Activated T-helper 1 cell treated with anti-CD3 and anti-CD28 coated beads, Interleukin-12 subunit alpha, Interleukin-12 subunit beta, Interleukin-2, Interleukin-4 antibody, amounts not matched to agents 30 ng/mL and 10 ng/mL and 1 ng/mL, durations not matched to agents 14 hours and 24 hours and 36 hours (primary cell): ENCODE measurements at regions of chr6 and their contacts with region 1.

Region 1: DNA sequence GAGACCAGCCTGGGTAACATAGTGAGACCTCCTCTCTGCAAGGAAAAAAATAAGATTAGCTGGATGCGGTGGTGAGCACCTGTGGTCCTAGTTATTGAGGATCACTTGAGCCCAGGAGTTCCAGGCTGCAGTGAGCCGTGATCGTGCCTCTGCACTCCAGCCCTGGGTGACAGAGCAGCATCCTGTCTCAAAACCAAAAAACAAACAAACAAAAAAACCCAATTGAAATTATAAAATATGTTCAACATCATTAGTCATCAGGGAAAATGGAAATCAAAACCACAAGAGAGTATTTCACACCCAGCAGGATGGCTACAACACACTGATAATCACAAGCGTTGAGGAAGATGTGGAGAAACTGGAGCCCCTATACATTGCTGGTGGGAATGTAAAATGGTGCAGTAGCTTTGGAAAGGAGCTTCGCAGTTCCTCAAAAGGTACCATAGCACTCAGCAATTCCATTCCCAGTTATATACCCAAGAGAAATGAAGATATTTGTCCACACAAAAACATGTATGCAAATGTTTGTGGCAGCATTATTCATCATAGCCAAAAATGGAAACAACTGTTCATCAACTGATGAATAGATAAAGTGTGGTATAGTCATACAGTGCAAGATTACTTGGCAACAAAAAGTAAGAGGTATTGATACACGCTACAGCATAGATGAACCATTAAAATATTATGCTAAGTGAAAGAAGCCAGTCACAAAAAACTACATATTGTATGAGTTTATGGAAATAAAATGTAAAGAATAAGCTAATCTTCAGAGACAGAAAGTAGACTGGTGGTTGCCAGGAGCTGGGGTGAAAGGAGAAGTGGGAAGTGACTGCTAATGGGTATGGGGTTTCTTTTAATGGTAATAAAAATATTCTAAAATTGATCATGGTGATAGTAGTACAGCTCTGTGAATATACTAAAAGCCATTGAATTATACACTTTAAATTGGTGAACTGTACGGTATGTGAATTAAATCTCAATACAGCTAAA is 38.7 kb upstream of the RIPOR2 start:
- DNase-seq: no peak
- H3K4me3 Mint-ChIP-seq: peak overlapping the region; percentile 34
- H3K27ac Mint-ChIP-seq: peak overlapping the region; percentile 86
- H3K4me1 Mint-ChIP-seq: peaks cover 52% of the 10 kb centered on the region
- H3K27me3 Mint-ChIP-seq: no peaks in the 10 kb centered on the region

Region 2: DNA sequence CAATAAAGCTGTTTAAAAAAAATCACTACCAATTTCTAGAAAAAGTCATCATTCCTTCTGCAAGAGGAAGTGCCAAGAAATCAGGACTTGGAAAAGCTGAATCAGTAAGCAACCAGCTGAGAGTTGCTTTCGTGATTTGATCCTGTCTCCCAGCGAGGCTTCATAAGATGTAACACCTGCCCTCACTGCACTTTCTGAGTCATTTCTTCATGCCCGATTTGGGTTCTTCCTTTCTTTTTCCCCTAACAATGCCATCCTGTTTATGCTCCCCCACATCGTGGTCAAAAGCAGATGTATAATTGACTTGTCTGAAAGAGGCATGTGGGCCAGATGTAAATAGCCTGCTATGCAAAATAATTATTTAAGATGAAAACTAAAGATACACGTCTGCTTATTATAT is 90.9 kb before region 1 on chr6:
- intact Hi-C with region 1: loop called (anchors 1 kb)
- DNase-seq: no peak
- H3K4me3 Mint-ChIP-seq: peak overlapping the region; percentile 66
- H3K27ac Mint-ChIP-seq: peak overlapping the region; percentile 91
- H3K4me1 Mint-ChIP-seq: peaks cover 79% of the 10 kb centered on the region
- H3K27me3 Mint-ChIP-seq: no peaks in the 10 kb centered on the region

Region 3: DNA sequence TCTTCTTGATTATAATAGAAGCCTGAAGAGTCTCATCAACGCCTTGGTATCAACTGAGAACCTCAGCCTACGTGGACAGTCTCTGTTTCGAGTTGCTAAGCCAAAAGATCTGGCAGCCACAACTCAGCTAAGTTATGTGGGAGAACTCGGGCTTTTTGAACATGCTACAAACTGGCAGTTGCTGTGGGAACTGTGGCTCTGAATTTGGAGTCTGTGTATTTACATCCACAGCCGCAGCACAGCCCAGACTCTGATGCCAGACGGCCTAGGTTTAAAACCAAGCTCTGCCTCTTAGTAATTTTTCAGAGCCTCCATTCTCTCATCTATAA is 74.5 kb before region 1 on chr6:
- intact Hi-C with region 1: loop called (anchors 2 kb)
- DNase-seq: no peak
- H3K4me3 Mint-ChIP-seq: peak overlapping the region; percentile 74
- H3K27ac Mint-ChIP-seq: peak overlapping the region; percentile 77
- H3K4me1 Mint-ChIP-seq: peaks cover 48% of the 10 kb centered on the region
- H3K27me3 Mint-ChIP-seq: no peaks in the 10 kb centered on the region

Region 4: GRCh38 chr6:24949020-24949569 is 25.4 kb before region 1 on chr6:
- intact Hi-C with region 1: loop called (anchors 1 kb)
- DNase-seq: peak; percentile 68
- H3K4me3 Mint-ChIP-seq: peak overlapping the region; percentile 65
- H3K27ac Mint-ChIP-seq: peak overlapping the region; percentile 95
- H3K4me1 Mint-ChIP-seq: peaks cover 76% of the 10 kb centered on the region
- H3K27me3 Mint-ChIP-seq: no peaks in the 10 kb centered on the region

Region 5: GRCh38 chr6:24991810-24992467 is 17.5 kb after region 1 on chr6:
- intact Hi-C with region 1: loop called (anchors 1 kb)
- DNase-seq: peak; percentile 71
- H3K4me3 Mint-ChIP-seq: peak overlapping the region; percentile 21
- H3K27ac Mint-ChIP-seq: peak overlapping the region; percentile 80
- H3K4me1 Mint-ChIP-seq: peaks cover 40% of the 10 kb centered on the region
- H3K27me3 Mint-ChIP-seq: no peaks in the 10 kb centered on the region

Region 6: DNA sequence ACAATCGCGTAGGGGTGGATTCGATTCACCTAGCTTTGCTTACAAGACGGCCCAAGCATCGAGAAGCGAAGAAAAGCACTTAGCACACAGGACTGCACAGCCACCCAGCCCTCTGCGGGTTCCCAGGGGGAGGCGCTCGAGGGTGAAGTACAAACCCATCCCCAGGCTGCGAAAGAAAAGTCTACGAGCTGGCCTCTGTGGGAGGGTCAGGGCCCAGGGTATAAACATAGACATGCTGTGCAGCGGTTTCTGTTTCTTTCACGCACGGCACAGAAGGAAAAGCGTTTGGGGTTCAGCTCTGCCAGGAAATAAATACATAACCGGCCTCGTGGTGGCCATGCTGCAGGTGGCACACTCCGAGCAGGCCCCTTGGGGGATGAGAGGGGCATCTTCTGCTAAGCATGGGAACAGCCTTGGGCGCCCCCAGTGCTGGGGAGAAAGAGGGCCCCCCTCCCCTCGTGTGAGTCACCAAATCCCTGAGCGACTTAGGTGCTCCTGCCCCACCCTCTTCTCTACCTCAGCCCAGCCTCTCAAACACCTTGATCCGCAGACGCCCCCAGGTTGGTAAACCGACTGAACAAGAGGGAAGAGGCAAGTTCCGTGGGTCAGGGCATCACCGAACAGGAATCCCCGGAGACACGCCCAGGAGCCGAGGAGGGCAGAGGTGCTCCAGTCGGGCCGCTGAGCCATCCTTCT is 52.9 kb after region 1 on chr6:
- intact Hi-C with region 1: loop called (anchors 1 kb)
- DNase-seq: peak; percentile 72
- H3K4me3 Mint-ChIP-seq: peak overlapping the region; percentile 74
- H3K27ac Mint-ChIP-seq: peak overlapping the region; percentile 83
- H3K4me1 Mint-ChIP-seq: peaks cover 48% of the 10 kb centered on the region
- H3K27me3 Mint-ChIP-seq: no peaks in the 10 kb centered on the region